Activated CD8-positive, alpha-beta T cell treated with anti-CD3 and anti-CD28 coated beads for 36 hours (primary cell): ENCODE measurements at regions of chr1 and their contacts with region 1.

Region 1: DNA sequence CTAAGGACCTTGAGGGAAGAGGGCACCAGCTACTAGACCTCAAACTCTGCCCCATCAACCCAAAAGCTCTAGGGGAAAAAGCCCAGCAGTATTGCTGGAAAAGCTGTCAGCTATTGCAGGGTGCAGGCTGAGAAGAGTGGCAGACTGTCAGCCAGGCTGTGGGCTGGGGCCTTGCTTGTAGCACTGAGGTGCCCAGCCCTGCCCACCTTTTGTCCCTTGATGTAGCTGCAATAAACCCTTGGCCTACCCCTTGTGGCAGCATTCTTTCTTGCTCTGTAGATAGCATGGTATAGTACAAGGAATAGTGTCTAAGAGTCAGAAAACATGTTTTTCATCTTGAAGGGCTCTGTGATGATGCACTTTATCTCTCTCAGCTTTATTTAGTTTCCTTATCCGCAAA is 39.4 kb downstream of the CDC14A start:
- DNase-seq: peak; percentile 53
- ATAC-seq: peak; percentile 71
- H3K4me3 Mint-ChIP-seq: no peak overlapping the region
- H3K27ac Mint-ChIP-seq: peak overlapping the region; percentile 66
- H3K4me1 Mint-ChIP-seq: peaks cover 82% of the 10 kb centered on the region
- H3K27me3 Mint-ChIP-seq: no peaks in the 10 kb centered on the region
- CTCF ChIP-seq: no peak

Region 2: DNA sequence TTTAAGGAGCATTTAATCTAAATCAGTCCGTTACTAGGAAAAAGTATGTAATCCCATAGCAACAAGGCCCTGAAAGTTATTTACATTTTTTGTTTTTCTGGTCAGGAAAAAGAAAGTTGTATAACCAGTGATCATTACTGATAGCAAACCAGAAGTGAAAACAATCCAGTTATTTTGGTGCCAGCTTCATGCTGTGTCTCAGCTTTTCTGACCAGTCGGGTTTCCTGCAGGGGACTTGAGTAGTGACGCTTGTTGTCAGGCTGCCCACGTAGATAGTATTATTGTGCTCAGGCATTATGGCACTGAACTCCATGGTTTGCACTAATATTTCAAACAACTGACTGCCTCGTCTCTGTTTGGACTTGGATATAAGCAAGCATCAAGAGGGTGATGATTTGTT is 314.1 kb before region 1 on chr1:
- CTCF ChIA-PET with region 1: no interaction called
- POLR2A ChIA-PET with region 1: no interaction called
- intact Hi-C with region 1: no loop called
- DNase-seq: no peak
- ATAC-seq: no peak
- H3K4me3 Mint-ChIP-seq: no peak overlapping the region
- H3K27ac Mint-ChIP-seq: peak overlapping the region; percentile 28
- H3K4me1 Mint-ChIP-seq: peaks cover 11% of the 10 kb centered on the region
- H3K27me3 Mint-ChIP-seq: no peaks in the 10 kb centered on the region
- CTCF ChIP-seq: no peak

Region 3: GRCh38 chr1:100299521-100300222 is 92.0 kb before region 1 on chr1:
- CTCF ChIA-PET with region 1: no interaction called
- POLR2A ChIA-PET with region 1: no interaction called
- intact Hi-C with region 1: no loop called
- DNase-seq: peak; percentile 19
- ATAC-seq: peak; percentile 67
- H3K4me3 Mint-ChIP-seq: no peak overlapping the region
- H3K27ac Mint-ChIP-seq: no peak overlapping the region
- H3K4me1 Mint-ChIP-seq: peaks cover 5% of the 10 kb centered on the region
- H3K27me3 Mint-ChIP-seq: no peaks in the 10 kb centered on the region
- CTCF ChIP-seq: no peak

Region 4: GRCh38 chr1:100358210-100358609 is 33.5 kb before region 1 on chr1:
- CTCF ChIA-PET with region 1: interaction called, 14 read pairs
- POLR2A ChIA-PET with region 1: interaction called, 9 read pairs
- intact Hi-C with region 1: loop called (anchors 5 kb)
- DNase-seq: peak; percentile 46
- ATAC-seq: no peak
- H3K4me3 Mint-ChIP-seq: no peak overlapping the region
- H3K27ac Mint-ChIP-seq: peak overlapping the region; percentile 47
- H3K4me1 Mint-ChIP-seq: peaks cover 86% of the 10 kb centered on the region
- H3K27me3 Mint-ChIP-seq: no peaks in the 10 kb centered on the region
- CTCF ChIP-seq: peak; percentile 59